ENCODE measurements at regions of chr12 and their contacts with region 1.

Region 1: GRCh38 chr12:54398995-54399793 is 14.7 kb upstream of the ZNF385A start:
- DNase-seq: peak; percentile 94
- H3K4me3 ChIP-seq: no peak overlapping the region
- H3K27ac ChIP-seq: peak overlapping the region in 3 of 4 donors; percentile 99 to 100 (median 100)
- H3K4me1 ChIP-seq: peaks cover 0 to 42% (median 21%) of the 10 kb centered on the region in 4 donors
- H3K27me3 ChIP-seq: no peaks in the 10 kb centered on the region
- CTCF ChIP-seq: peak; percentile 97 to 99 (median 98)
- EP300 ChIP-seq: no peak
- POLR2A ChIP-seq: no peak

Region 2: DNA sequence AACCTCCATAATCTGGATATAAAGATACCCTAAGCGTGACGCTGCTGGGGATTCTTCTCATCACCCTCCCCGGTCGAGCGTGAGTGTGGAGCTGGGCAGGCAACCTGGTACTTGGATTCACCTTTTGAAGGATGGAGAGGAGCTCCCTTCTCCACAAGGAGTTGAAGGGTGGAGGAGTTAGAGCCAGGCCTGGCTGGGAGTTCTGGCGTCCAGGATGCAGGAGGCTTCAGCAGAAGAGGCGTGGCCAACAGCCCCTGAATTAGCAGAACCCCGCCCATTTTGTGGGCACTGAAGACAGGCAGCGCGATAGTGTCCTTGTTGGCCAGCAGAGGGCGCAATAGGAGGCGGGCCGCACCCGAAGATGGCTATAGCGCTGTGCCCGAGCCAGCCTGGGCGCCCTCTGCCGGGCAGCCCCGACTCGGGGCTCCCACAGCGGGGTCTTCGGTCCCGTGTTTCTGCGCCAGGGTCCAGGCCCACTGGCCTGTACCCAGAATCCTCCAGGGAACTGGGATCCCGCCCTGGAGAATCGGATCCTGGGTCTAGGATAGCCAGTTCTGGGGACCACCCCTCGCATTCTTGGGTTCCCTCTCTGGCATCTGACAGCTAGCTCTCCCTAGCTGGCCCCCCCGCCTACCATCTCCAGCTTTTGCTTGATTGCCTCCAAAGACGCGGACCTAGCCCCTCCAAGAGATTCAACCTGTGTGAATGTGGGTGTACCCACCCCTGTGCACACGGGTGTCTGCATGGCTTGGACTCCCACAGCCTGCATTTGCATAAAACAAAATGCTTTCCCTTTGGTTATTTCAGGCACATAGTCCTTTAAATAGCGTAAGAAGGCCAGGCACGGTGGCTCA is 184.4 kb before region 1 on chr12:
- intact Hi-C with region 1: no loop called
- DNase-seq: peak; percentile 88
- H3K4me3 ChIP-seq: no peak overlapping the region
- H3K27ac ChIP-seq: no peak overlapping the region
- H3K4me1 ChIP-seq: peaks cover 0 to 29% (median 21%) of the 10 kb centered on the region in 4 donors
- H3K27me3 ChIP-seq: peaks cover 32 to 85% (median 81%) of the 10 kb centered on the region in 3 donors
- CTCF ChIP-seq: peak; percentile 44 to 87 (median 74)
- EP300 ChIP-seq: no peak
- POLR2A ChIP-seq: no peak

Region 3: GRCh38 chr12:54439521-54440255 is 40.5 kb after region 1 on chr12:
- intact Hi-C with region 1: loop called (anchors 1 kb)
- DNase-seq: no peak
- H3K4me3 ChIP-seq: no peak overlapping the region
- H3K27ac ChIP-seq: peak overlapping the region; percentile 40 to 100 (median 85)
- H3K4me1 ChIP-seq: peaks cover 0 to 75% (median 50%) of the 10 kb centered on the region in 4 donors
- H3K27me3 ChIP-seq: no peaks in the 10 kb centered on the region
- CTCF ChIP-seq: peak; percentile 67 to 86 (median 82)
- EP300 ChIP-seq: no peak
- POLR2A ChIP-seq: no peak

Region 4: DNA sequence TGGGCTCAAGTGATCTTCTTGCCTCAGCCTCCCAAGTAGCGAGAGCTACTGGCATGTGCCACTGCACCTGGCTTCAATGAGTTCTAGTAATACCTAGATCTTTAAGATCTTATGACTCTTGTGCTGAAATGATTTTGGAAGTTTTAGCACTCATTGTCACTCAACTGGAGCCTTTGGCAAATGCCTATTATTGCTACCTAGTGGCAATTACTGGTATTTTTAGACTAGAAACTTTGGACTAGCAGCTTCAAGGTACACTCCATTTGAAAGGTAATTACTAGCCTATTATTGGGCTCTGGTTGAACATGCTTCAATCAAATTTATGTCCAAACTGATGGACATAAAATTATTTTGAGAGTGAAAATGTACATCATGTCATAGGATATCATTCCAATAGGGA is 374.4 kb after region 1 on chr12:
- intact Hi-C with region 1: no loop called
- DNase-seq: no peak
- H3K4me3 ChIP-seq: no peak overlapping the region
- H3K27ac ChIP-seq: no peak overlapping the region
- H3K4me1 ChIP-seq: no peaks in the 10 kb centered on the region
- H3K27me3 ChIP-seq: no peaks in the 10 kb centered on the region
- CTCF ChIP-seq: no peak
- EP300 ChIP-seq: no peak
- POLR2A ChIP-seq: no peak

Region 5: DNA sequence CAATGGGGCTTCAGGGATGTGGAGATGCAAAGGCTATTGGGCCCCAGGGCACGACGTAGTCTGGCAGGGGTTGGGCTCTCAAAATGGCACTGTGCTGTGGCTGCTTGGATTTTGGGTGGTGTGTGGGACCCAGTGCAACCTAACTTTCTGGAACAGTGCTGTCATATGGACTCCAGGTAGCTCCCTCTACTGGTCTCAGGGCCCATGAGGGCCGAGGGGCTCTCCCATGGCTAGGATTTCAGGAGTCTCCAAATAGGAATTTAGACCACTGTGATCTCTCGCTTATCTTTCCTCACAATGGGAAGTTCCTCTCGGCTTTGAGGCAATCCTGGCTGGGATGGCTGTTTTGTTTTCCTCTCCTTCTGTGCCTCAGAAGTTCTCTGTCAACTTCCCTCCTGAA is 386.9 kb after region 1 on chr12:
- intact Hi-C with region 1: no loop called
- DNase-seq: no peak
- H3K4me3 ChIP-seq: no peak overlapping the region
- H3K27ac ChIP-seq: no peak overlapping the region
- H3K4me1 ChIP-seq: no peaks in the 10 kb centered on the region
- H3K27me3 ChIP-seq: no peaks in the 10 kb centered on the region
- CTCF ChIP-seq: no peak
- EP300 ChIP-seq: no peak
- POLR2A ChIP-seq: no peak